SK-N-SH (cell line): ENCODE measurements at regions of chr7 and their contacts with region 1.

Region 1: DNA sequence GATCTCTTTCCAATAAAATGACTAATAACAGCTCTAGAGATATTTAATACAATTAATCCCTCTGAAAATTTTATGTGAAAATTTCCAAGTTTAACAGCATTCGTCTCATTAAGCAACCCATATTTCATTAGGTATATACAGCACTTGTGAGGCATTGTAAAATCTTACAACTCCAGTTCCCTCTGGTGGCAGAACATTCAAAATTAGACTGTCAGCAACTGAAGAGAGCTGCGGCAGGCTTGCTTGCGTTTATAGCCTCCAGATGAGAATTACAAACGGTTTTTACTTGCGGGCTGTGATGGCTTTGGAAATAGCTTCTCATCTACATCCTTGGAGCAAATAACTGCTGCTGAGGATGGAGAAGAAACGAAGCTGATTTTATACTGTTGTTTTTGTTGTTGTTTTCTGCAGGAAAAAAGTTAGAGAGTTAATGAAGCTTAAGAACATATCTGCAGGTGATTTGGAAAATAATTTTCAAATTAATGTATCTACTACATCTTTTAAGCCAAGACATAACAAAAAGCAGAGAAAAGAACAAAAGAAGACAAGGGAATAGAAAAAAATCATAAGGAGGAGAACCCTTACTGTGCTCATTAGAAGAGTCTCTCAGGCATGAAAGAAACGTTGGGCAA is 171.3 kb downstream of the MAGI2 start:
- DNase-seq: peak; percentile 9
- H3K4me3 ChIP-seq: peak overlapping the region in 1 of 2 experiments; percentile 7; a peak in 2 of 4 replicates
- H3K27ac ChIP-seq: peak overlapping the region; percentile 48 to 72; a peak in 3 of 4 replicates
- H3K4me1 ChIP-seq: peaks cover 6 to 32% of the 10 kb centered on the region in 2 experiments
- H3K27me3 ChIP-seq: no peaks in the 10 kb centered on the region
- CTCF ChIP-seq: peak; percentile 66
- EP300 ChIP-seq: no peak
- RAD21 ChIP-seq: peak; percentile 69

Region 2: DNA sequence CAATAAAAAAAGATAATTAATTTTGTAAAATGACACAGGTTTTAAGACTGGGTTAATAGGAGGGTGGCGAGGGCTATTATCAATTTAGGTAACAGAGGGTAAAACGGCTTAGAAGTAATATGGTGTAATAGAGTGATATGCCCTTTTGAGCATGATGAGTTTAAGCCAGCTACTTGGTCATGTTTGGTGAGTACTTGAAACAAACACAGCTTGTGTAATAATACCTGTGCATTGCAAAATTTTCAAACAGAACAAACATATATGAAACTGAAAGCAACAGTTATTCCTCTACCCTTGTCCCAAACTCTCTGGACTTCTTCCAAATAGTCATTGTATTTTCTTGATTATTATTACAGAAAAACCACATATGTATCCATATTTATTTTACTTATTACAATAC is 70.5 kb before region 1 on chr7:
- CTCF ChIA-PET with region 1: no interaction called
- POLR2A ChIA-PET with region 1: no interaction called
- DNase-seq: no peak
- H3K4me3 ChIP-seq: no peak overlapping the region
- H3K27ac ChIP-seq: no peak overlapping the region
- H3K4me1 ChIP-seq: no peaks in the 10 kb centered on the region
- H3K27me3 ChIP-seq: no peaks in the 10 kb centered on the region
- CTCF ChIP-seq: no peak
- EP300 ChIP-seq: no peak
- RAD21 ChIP-seq: no peak

Region 3: DNA sequence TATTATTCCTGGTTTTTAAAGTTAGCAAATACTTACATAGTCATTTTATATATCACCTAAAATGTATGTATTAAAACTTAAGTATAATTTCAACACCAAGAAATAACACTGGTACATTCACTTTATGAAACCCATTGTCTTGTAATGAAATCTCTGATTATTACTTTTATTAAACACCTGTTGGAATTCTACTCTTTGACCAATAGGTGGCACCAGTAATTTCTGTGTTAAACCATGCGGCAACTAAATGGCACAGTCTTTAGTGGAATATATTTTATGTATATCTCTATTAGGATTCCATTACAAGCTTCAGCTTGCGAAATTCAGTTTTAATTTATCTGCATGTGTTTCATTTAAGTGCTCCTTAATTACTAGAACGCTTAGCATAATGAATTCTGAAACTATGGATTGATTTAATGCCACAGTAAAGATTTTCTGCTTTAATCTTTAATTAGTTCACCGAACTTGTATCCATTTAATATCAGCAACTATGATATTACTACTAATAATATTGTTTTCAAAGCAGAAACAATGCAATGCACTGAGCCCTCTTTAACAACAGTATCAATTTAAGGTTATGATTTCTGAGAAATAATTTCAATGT is 10.0 kb before region 1 on chr7:
- CTCF ChIA-PET with region 1: interaction called, 28 read pairs
- POLR2A ChIA-PET with region 1: no interaction called
- DNase-seq: peak; percentile 41
- H3K4me3 ChIP-seq: no peak overlapping the region
- H3K27ac ChIP-seq: no peak overlapping the region
- H3K4me1 ChIP-seq: no peaks in the 10 kb centered on the region; a peak in 1 of 4 replicates
- H3K27me3 ChIP-seq: no peaks in the 10 kb centered on the region
- CTCF ChIP-seq: peak; percentile 94
- EP300 ChIP-seq: no peak
- RAD21 ChIP-seq: peak; percentile 78